H1 (cell line): ENCODE measurements at regions of chr3 and their contacts with region 1.

Region 1: GRCh38 chr3:57100046-57100695 is 39.7 kb downstream of the SPATA12 start:
- DNase-seq: peak in 1 of 2 experiments; percentile 85
- H3K4me3 ChIP-seq: no peak overlapping the region
- H3K27ac ChIP-seq: no peak overlapping the region
- H3K4me1 ChIP-seq: no peaks in the 10 kb centered on the region
- H3K27me3 ChIP-seq: no peaks in the 10 kb centered on the region
- CTCF ChIP-seq: peak; percentile 26 to 90 (median 76)
- EP300 ChIP-seq: no peak
- POLR2A ChIP-seq: no peak
- RAD21 ChIP-seq: peak; percentile 96

Region 2: DNA sequence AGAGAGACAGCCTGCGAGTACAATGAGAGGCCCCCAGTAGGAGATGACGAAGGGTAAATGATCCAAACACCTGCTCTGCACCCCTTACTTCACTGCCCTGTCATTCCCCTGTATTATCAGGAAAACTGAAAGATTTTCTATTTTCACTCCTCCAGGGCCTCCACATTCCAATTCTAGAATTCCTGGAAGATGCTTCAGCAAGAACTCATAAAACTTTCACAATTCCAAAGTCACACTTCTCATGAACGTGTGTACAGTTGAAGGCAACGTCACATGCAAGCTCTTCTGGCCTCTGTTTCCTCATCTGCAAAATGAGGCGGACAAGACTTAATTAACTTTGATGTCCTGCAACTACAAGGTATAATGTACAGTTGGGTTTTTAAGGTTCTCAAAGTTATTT is 102.5 kb before region 1 on chr3:
- CTCF ChIA-PET with region 1: interaction called, 15 read pairs
- POLR2A ChIA-PET with region 1: no interaction called
- DNase-seq: no peak
- H3K4me3 ChIP-seq: no peak overlapping the region
- H3K27ac ChIP-seq: no peak overlapping the region
- H3K4me1 ChIP-seq: no peaks in the 10 kb centered on the region
- H3K27me3 ChIP-seq: no peaks in the 10 kb centered on the region
- CTCF ChIP-seq: no peak
- EP300 ChIP-seq: no peak
- POLR2A ChIP-seq: no peak
- RAD21 ChIP-seq: no peak

Region 3: GRCh38 chr3:57130571-57131209 is 30.5 kb after region 1 on chr3:
- CTCF ChIA-PET with region 1: interaction called, 11 read pairs
- POLR2A ChIA-PET with region 1: interaction called, 10 read pairs
- DNase-seq: peak; percentile 94 to 99
- H3K4me3 ChIP-seq: peak overlapping the region in 2 of 4 experiments; percentile 1 to 36; a peak in 3 of 8 replicates
- H3K27ac ChIP-seq: peak overlapping the region; percentile 80; the same call in 1 of the 2 replicates
- H3K4me1 ChIP-seq: peaks cover 23 to 55% (median 43%) of the 10 kb centered on the region in 4 experiments
- H3K27me3 ChIP-seq: peaks cover under 1 to 5% (median 2%) of the 10 kb centered on the region in 4 experiments; a peak in 5 of 7 replicates
- CTCF ChIP-seq: no peak
- EP300 ChIP-seq: peak; percentile 53 to 95
- POLR2A ChIP-seq: peak; percentile 62 to 68
- RAD21 ChIP-seq: 0 out of 4 replicates have a peak, but pooled peaks of 1 of the 2 experiments have one; percentile 9

Region 4: GRCh38 chr3:57141719-57142410 is 41.7 kb after region 1 on chr3:
- CTCF ChIA-PET with region 1: interaction called, 11 read pairs
- POLR2A ChIA-PET with region 1: no interaction called
- DNase-seq: no peak
- H3K4me3 ChIP-seq: peak overlapping the region in 1 of 4 experiments; percentile 3; a peak in 2 of 8 replicates
- H3K27ac ChIP-seq: no peak overlapping the region
- H3K4me1 ChIP-seq: peaks cover 6 to 19% (median 12%) of the 10 kb centered on the region in 4 experiments; a peak in 6 of 7 replicates
- H3K27me3 ChIP-seq: no peaks in the 10 kb centered on the region
- CTCF ChIP-seq: peak in 2 of 3 experiments; percentile 1 to 3; a peak in 1 of 4 replicates
- EP300 ChIP-seq: no peak
- POLR2A ChIP-seq: no peak
- RAD21 ChIP-seq: peak; percentile 15 to 48; a peak in 3 of 4 replicates

Region 5: GRCh38 chr3:57169872-57170623 is 69.9 kb after region 1 on chr3:
- CTCF ChIA-PET with region 1: interaction called, 64 read pairs
- POLR2A ChIA-PET with region 1: no interaction called
- DNase-seq: peak; percentile 65 to 92
- H3K4me3 ChIP-seq: peak overlapping the region; percentile 33 to 64 (median 54); a peak in 6 of 8 replicates
- H3K27ac ChIP-seq: no peak overlapping the region
- H3K4me1 ChIP-seq: peaks cover 3 to 9% (median 5%) of the 10 kb centered on the region in 4 experiments
- H3K27me3 ChIP-seq: peaks cover 0 to 5% (median 0%) of the 10 kb centered on the region in 4 experiments; a peak in 3 of 7 replicates
- CTCF ChIP-seq: peak; percentile 76 to 81 (median 79)
- EP300 ChIP-seq: no peak
- POLR2A ChIP-seq: no peak
- RAD21 ChIP-seq: peak; percentile 91 to 93

Region 6: GRCh38 chr3:57221883-57222282 is 121.7 kb after region 1 on chr3:
- CTCF ChIA-PET with region 1: interaction called, 36 read pairs
- POLR2A ChIA-PET with region 1: no interaction called
- DNase-seq: no peak
- H3K4me3 ChIP-seq: no peak overlapping the region
- H3K27ac ChIP-seq: no peak overlapping the region
- H3K4me1 ChIP-seq: no peaks in the 10 kb centered on the region
- H3K27me3 ChIP-seq: no peaks in the 10 kb centered on the region
- CTCF ChIP-seq: peak in 2 of 3 experiments; percentile 37 to 41; a peak in 2 of 4 replicates
- EP300 ChIP-seq: no peak
- POLR2A ChIP-seq: no peak
- RAD21 ChIP-seq: peak; percentile 78

Region 7: GRCh38 chr3:57382933-57383332 is 282.8 kb after region 1 on chr3:
- CTCF ChIA-PET with region 1: no interaction called
- POLR2A ChIA-PET with region 1: no interaction called
- DNase-seq: no peak
- H3K4me3 ChIP-seq: no peak overlapping the region
- H3K27ac ChIP-seq: no peak overlapping the region
- H3K4me1 ChIP-seq: peaks cover 0 to 2% (median 1%) of the 10 kb centered on the region in 4 experiments; a peak in 3 of 7 replicates
- H3K27me3 ChIP-seq: no peaks in the 10 kb centered on the region
- CTCF ChIP-seq: no peak
- EP300 ChIP-seq: no peak
- POLR2A ChIP-seq: no peak
- RAD21 ChIP-seq: no peak